ENCODE measurements at regions of chr6 and their contacts with region 1.

Region 1: DNA sequence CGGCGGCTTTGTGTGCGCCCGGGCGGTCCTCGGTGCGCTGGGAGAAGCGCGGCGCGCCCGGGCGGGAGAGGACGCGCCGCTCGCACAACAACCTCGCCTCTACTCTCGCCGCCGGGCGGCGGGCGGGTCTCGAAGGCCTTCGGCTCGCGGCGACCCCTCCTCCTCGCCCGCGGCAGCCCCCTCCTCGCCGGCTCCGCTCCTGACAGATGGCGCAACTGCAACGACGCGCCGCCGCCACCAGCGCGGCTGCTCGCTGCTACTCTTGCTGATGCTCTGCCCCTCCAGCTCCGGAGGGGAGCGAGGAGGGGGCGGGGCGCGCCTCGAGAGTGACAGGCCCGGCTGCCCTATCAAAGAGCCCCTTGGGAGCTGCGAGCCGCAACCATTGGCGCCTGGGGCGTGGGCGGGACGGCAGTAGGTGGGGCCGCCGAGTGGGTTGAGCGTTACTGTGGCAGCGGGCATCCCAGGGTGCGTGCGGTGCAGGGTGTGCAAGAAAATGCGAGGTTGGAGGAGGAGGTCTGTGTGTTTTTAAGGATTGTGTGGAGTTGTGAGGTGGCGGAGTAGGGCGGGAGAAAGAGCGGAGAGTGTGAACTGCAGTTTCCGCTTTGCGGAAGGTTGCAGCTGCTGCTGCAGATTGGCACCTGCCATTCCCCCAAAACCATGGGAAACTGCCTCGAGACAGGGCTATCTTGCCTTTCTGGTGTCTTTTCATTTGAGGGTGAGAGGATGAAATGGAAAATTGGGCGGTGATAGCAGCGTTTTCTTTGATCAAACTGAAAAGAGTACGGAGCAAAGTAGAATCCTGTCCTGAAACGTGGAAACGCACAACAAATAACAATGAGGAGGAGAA is at the start of gene FYN:
- DNase-seq: peak; percentile 99
- H3K4me3 Mint-ChIP-seq: peak within 1 kb of the TSS; percentile 99
- H3K27ac Mint-ChIP-seq: peak within 1 kb of the TSS; percentile 96
- H3K4me1 Mint-ChIP-seq: peaks cover 53% of the 10 kb centered on the region
- H3K27me3 Mint-ChIP-seq: peaks cover 4% of the 10 kb centered on the region

Region 2: DNA sequence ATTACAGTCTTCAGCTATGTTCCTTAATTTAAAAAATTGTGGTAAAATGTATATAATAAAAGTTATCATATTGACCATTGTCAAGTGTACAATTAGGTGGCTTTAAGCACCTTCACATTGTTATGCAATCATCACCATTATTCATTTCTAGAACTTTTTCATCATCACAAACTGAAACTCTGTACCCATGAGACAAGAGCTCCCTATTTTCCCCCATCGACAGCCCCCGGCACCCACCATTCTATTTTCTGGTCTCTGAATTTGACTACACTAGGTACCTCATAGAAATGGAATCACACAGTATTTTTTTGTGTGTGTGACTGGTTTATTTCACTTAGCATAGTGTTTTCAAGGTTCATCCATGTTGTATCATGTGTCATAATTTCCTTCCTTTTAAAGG is 39.5 kb after region 1 on chr6:
- CTCF ChIA-PET with region 1: no interaction called
- DNase-seq: no peak
- H3K4me3 Mint-ChIP-seq: no peak overlapping the region
- H3K27ac Mint-ChIP-seq: no peak overlapping the region
- H3K4me1 Mint-ChIP-seq: no peaks in the 10 kb centered on the region
- H3K27me3 Mint-ChIP-seq: peaks cover 3% of the 10 kb centered on the region

Region 3: DNA sequence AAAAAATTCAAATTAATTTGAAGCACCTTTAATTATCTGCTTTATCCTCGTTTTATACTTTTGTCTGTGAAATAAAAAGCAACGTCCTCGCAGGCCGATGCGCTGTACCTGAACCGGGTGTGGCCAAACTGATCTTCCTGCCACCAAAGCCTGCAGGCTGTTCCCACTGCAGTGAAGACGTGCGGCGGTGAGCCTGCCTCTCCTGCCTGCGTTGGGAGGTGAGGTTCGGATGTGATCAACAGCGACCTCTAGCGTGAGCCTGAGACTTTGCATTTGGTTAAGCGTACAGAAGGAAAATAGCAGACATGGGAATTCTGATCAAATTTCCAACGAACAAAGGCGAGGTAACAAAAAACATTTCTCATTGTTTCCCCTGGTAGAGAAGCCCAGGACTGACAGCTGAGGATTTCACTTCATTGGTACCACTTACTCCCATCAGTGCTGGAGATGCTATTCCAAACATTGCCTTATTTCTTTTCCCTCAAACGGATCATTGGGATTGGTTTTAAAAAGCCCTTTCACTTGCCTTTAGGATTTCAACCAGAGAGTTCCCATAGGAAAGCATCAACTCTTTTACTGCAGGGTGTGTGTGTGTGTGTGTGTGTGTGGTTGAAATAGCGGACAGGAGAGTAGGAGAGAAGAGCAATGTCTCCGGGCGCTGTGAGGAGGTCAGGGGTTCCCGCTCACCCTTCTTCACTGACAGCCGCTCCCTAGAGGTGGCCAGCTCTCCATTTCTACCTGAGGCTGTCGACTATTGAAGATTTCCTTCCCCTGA is 123.9 kb after region 1 on chr6:
- CTCF ChIA-PET with region 1: interaction called, 12 read pairs
- DNase-seq: peak; percentile 87
- H3K4me3 Mint-ChIP-seq: peak overlapping the region; percentile 29
- H3K27ac Mint-ChIP-seq: peak overlapping the region; percentile 58
- H3K4me1 Mint-ChIP-seq: peaks cover 45% of the 10 kb centered on the region
- H3K27me3 Mint-ChIP-seq: no peaks in the 10 kb centered on the region